Naive thymus-derived CD4-positive, alpha-beta T cell (primary cell): ENCODE measurements at regions of chr10 and their contacts with region 1.

Region 1: DNA sequence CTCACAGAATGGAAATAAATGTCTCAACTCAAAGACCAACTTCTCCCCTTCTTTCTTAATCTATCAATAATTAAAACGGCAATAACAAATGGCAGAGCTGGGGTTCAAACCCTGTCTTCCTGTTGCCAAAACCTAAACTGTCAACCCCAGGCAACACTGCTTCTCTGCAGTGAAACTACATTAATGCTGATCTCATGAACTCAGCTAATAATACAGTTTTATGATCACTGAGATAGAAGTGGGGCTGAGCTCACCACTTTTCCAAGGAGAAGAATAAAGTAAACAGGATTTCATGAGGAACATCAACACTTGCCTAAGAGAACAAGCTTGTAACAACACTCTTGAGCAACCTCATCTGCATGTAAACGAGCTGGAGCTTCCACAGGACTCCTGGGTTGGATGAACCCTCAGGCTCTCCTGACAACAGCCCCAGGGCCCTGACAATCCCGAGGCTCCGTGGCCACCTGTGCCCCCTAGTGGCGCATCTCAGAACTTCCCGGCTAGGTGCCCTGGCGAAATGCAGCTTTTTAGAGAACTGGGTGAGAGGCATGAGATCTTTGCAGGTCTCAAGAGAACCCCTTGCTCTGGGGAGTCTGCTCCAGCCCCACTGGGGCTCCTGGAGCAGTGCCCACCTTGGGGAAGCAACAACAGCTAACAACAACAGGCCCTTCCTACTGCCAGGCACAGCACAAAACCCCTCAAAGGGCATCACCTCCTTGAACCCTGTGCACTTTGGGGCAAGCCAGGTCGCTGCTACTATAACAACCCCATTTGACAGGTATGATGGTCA is 169.3 kb downstream of the SH3PXD2A start:
- DNase-seq: peak; percentile 45 to 82 (median 69)
- ATAC-seq: peak; percentile 93
- H3K4me3 ChIP-seq: no peak overlapping the region
- H3K4me3 Mint-ChIP-seq: no peak overlapping the region
- H3K27ac ChIP-seq: no peak overlapping the region
- H3K27ac Mint-ChIP-seq: peak overlapping the region in 4 of 9 donors; percentile 29 to 48 (median 38)
- H3K4me1 ChIP-seq: no peaks in the 10 kb centered on the region
- H3K4me1 Mint-ChIP-seq: peaks cover 0 to 15% (median 0%) of the 10 kb centered on the region in 7 donors
- H3K27me3 ChIP-seq: no peaks in the 10 kb centered on the region
- H3K27me3 Mint-ChIP-seq: peaks cover 0 to 4% (median 0%) of the 10 kb centered on the region in 5 donors

Region 2: DNA sequence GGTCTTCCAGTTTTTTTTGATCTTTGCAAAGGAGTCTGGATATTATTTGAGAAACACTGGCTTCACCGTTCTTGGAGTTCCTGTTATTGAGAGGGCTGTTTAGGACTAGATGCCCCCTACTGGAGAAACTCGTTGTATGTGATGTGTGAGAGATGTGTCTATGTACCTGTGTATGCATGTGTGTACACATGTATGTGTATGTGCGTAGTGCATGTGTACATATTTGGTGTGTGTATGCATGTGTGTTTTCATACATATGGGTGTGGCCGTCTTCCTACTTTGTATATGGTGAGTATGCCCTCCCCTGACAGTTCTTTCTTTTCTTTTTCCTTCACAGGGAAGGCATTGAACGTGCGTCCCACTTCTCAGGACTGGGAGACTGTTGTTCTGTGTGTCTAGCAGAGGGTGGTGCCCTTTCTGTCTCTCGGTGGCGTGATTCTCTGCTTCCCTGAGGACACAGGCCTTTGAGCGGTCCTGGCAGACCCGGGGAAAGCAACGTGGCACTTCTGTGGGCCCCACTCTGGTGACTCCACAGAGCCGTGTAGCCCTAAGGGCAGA is 204.0 kb before region 1 on chr10:
- CTCF ChIA-PET with region 1: interaction called, 3 read pairs
- POLR2A ChIA-PET with region 1: no interaction called
- intact Hi-C with region 1: loop called in 1 of 2 experiments (anchors 1 kb)
- DNase-seq: peak in 7 of 9 donors; percentile 41 to 69 (median 57)
- ATAC-seq: peak; percentile 79
- H3K4me3 ChIP-seq: no peak overlapping the region
- H3K4me3 Mint-ChIP-seq: no peak overlapping the region
- H3K27ac ChIP-seq: no peak overlapping the region
- H3K27ac Mint-ChIP-seq: no peak overlapping the region
- H3K4me1 ChIP-seq: no peaks in the 10 kb centered on the region
- H3K4me1 Mint-ChIP-seq: peaks cover 0 to 27% (median 4%) of the 10 kb centered on the region in 7 donors
- H3K27me3 ChIP-seq: no peaks in the 10 kb centered on the region
- H3K27me3 Mint-ChIP-seq: peaks cover 0 to 6% (median 0%) of the 10 kb centered on the region in 5 donors

Region 3: DNA sequence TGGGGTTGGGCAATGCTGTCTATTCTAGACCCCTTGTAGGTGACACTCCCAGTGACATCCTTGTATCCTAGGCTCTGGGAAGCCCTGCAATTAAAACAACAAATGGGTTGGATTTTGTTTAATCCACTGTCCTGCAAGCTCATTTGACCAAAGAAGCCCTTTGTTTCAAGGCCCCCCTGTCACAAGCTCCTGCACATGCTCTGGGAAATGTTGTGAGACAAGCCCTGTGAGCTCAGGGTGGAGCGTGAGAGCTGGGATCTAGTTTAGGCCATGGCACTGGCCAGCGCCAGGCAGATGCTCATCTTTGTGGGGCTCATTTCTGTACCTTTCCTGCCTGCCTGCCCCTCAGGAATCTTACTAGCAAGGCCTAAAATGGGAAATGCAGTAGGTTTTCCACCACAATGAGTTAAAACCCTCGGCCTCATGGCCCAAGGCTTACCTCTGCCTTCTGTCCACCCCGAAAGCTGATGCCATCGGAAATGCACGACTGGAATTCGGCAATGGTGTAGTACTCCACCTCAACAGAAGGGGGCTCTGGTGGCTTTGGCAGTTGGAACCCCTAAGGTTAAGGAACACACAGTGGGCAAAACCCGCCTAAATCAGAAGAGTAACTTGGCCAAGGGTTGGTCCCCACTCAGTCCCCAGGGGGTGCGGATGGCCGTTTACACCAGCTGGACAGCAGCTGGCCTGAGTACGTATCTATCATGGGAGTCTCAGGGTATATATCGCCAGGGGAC is 80.5 kb before region 1 on chr10:
- CTCF ChIA-PET with region 1: interaction called, 17 read pairs
- POLR2A ChIA-PET with region 1: interaction called, 3 read pairs
- intact Hi-C with region 1: loop called (anchors 1 kb)
- DNase-seq: peak in 8 of 9 donors; percentile 12 to 51 (median 27)
- ATAC-seq: peak; percentile 56
- H3K4me3 ChIP-seq: no peak overlapping the region
- H3K4me3 Mint-ChIP-seq: no peak overlapping the region
- H3K27ac ChIP-seq: no peak overlapping the region
- H3K27ac Mint-ChIP-seq: no peak overlapping the region
- H3K4me1 ChIP-seq: no peaks in the 10 kb centered on the region
- H3K4me1 Mint-ChIP-seq: no peaks in the 10 kb centered on the region
- H3K27me3 ChIP-seq: no peaks in the 10 kb centered on the region
- H3K27me3 Mint-ChIP-seq: no peaks in the 10 kb centered on the region

Region 4: DNA sequence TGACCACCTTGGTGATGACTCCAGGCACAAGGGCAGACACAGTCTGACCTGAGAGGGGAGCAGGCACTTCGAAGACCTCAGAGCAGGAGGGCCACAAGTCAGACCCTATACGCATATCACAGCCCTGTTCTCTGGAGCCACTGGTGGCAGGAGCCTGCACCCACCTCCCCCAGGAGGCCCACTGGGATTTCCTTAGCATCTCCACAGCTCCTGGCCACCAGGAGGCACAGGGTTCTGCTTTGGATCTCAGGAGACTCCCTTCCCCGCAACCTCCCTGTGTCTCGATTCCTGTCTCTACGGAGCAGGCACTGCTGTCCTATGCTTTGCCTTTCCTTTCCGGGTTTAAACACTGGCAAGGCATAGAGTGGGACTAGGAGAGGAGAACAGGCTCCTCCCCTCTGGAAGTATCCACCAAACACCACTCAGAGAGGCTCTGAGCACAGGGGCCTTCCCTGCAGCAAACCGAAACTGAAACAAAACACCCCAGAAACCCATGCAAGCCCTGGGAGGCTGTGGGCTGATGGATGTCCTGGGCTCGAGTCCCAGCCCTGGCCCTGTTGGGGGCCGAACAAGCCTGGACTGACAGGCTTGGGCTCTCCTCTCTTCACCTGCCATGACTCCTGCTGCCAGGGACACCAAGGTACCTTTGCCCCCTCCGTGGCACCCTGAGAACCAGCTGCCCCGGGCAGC is 26.3 kb before region 1 on chr10:
- CTCF ChIA-PET with region 1: interaction called, 7 read pairs
- POLR2A ChIA-PET with region 1: no interaction called
- intact Hi-C with region 1: loop called in 1 of 2 experiments (anchors 2 kb)
- DNase-seq: peak in 8 of 9 donors; percentile 48 to 70 (median 62)
- ATAC-seq: peak; percentile 82
- H3K4me3 ChIP-seq: peak overlapping the region; percentile 96
- H3K4me3 Mint-ChIP-seq: peak overlapping the region; percentile 83 to 94 (median 89)
- H3K27ac ChIP-seq: peak overlapping the region; percentile 92
- H3K27ac Mint-ChIP-seq: peak overlapping the region; percentile 87 to 95 (median 91)
- H3K4me1 ChIP-seq: peaks cover 4 to 6% of the 10 kb centered on the region in 2 donors
- H3K4me1 Mint-ChIP-seq: peaks cover 6 to 21% (median 13%) of the 10 kb centered on the region in 7 donors
- H3K27me3 ChIP-seq: no peaks in the 10 kb centered on the region
- H3K27me3 Mint-ChIP-seq: no peaks in the 10 kb centered on the region